PC-3 (cell line): ENCODE measurements at regions of chr9 and their contacts with region 1.

Region 1: GRCh38 chr9:92945796-92946195 is 1.5 kb upstream of the FGD3 start:
- DNase-seq: no peak
- ATAC-seq: no peak
- H3K4me3 ChIP-seq: no peak overlapping the region
- H3K27ac ChIP-seq: no peak overlapping the region
- H3K4me1 ChIP-seq: no peaks in the 10 kb centered on the region
- H3K27me3 ChIP-seq: no peaks in the 10 kb centered on the region
- CTCF ChIP-seq: no peak

Region 2: GRCh38 chr9:92808726-92809451 is 136.9 kb before region 1 on chr9:
- CTCF ChIA-PET with region 1: interaction called, 13 read pairs
- POLR2A ChIA-PET with region 1: no interaction called
- intact Hi-C with region 1: no loop called
- DNase-seq: peak; percentile 62
- ATAC-seq: peak; percentile 82
- H3K4me3 ChIP-seq: peak overlapping the region; percentile 58
- H3K27ac ChIP-seq: no peak overlapping the region
- H3K4me1 ChIP-seq: no peaks in the 10 kb centered on the region; the same call in 1 of the 2 replicates
- H3K27me3 ChIP-seq: peaks cover 42% of the 10 kb centered on the region
- CTCF ChIP-seq: peak; percentile 45